ENCODE measurements at regions of chr2 and their contacts with region 1.

Region 1: GRCh38 chr2:51031021-51031780 is 731 bp downstream of the NRXN1 start:
- DNase-seq: no peak
- H3K27ac ChIP-seq: no peak overlapping the region
- CTCF ChIP-seq: no peak

Region 2: DNA sequence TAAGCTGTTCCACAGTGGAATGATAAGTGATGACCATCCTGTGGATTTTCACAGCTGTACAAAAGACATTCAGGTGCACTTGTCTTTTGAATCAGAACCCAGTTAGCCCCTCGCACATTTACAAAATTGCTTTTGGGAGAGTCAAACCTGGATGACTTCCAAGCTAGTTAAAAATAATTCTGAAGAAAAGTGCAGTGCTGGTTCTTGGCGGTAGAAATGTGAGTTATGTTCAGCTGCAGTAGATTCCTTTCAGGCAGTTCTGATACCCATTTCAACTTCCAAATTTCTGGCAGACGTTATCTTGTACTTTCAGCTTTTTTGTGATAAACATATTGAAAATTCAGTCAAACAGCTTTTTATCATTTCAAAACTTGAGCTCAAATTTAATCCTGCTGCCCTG is 324.0 kb before region 1 on chr2:
- CTCF ChIA-PET with region 1: interaction called, 10 read pairs
- POLR2A ChIA-PET with region 1: no interaction called
- DNase-seq: no peak
- H3K27ac ChIP-seq: no peak overlapping the region
- CTCF ChIP-seq: no peak

Measured in RWPE1 (cell line).